ENCODE measurements at regions of chr15 and their contacts with region 1.

Region 1: GRCh38 chr15:35843498-35843897 is 297.5 kb upstream of the DPH6 start:
- DNase-seq: no peak
- ATAC-seq: no peak
- H3K4me3 ChIP-seq: no peak overlapping the region
- H3K4me3 Mint-ChIP-seq: no peak overlapping the region
- H3K27ac ChIP-seq: no peak overlapping the region
- H3K27ac Mint-ChIP-seq: no peak overlapping the region
- H3K4me1 ChIP-seq: no peaks in the 10 kb centered on the region
- H3K4me1 Mint-ChIP-seq: no peaks in the 10 kb centered on the region
- H3K27me3 ChIP-seq: no peaks in the 10 kb centered on the region
- H3K27me3 Mint-ChIP-seq: no peaks in the 10 kb centered on the region

Region 2: GRCh38 chr15:37002041-37002672 is 1158.7 kb after region 1 on chr15:
- CTCF ChIA-PET with region 1: interaction called in 1 of 2 experiments, 12 read pairs
- POLR2A ChIA-PET with region 1: no interaction called
- DNase-seq: no peak
- ATAC-seq: no peak
- H3K4me3 ChIP-seq: no peak overlapping the region
- H3K4me3 Mint-ChIP-seq: no peak overlapping the region
- H3K27ac ChIP-seq: no peak overlapping the region
- H3K27ac Mint-ChIP-seq: no peak overlapping the region
- H3K4me1 ChIP-seq: no peaks in the 10 kb centered on the region
- H3K4me1 Mint-ChIP-seq: no peaks in the 10 kb centered on the region
- H3K27me3 ChIP-seq: no peaks in the 10 kb centered on the region
- H3K27me3 Mint-ChIP-seq: peaks cover 3 to 4% of the 10 kb centered on the region in 2 donors